PC-3 (cell line): ENCODE measurements at regions of chr21 and their contacts with region 1.

Region 1: GRCh38 chr21:39125752-39126485 is 57.3 kb downstream of the PSMG1 start:
- DNase-seq: peak; percentile 83
- ATAC-seq: peak; percentile 95
- H3K4me3 ChIP-seq: no peak overlapping the region
- H3K27ac ChIP-seq: no peak overlapping the region
- H3K4me1 ChIP-seq: peaks cover 10% of the 10 kb centered on the region; the same call in 1 of the 2 replicates
- H3K27me3 ChIP-seq: no peaks in the 10 kb centered on the region
- CTCF ChIP-seq: peak; percentile 82

Region 2: DNA sequence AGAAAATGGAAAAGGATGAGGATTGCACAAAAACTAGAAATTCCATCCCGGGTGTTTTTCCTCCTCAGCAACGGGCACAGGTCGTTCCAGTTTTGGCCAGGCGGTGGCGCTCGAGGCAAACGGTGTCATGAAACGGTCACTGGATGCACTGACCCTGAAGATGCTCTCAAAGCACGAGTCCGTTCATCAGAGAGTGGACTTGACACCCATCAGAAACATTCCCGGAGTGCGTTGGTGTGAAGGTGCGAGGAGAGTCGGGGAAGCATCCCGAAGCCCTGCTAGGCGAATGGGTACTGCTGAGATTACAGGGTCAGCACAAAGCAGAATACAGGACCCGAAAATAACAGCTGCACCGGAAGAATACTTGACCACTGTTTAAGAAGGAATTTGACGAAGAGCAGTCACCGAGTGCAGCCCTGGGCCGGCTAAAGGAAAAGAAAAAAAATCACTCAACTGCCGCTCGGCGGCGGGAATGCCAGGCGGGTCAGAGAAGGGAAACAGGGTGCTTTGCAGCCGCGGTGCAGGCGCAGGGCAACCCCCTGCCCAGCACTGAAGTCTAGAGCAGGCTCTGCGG is 391.9 kb before region 1 on chr21:
- CTCF ChIA-PET with region 1: no interaction called
- POLR2A ChIA-PET with region 1: interaction called, 3 read pairs
- intact Hi-C with region 1: loop called (anchors 1 kb)
- DNase-seq: peak; percentile 84
- ATAC-seq: peak; percentile 90
- H3K4me3 ChIP-seq: no peak overlapping the region
- H3K27ac ChIP-seq: 0 out of 2 replicates have a peak overlapping the region, but pooled peaks have one; percentile 7
- H3K4me1 ChIP-seq: peaks cover 6% of the 10 kb centered on the region; the same call in 1 of the 2 replicates
- H3K27me3 ChIP-seq: no peaks in the 10 kb centered on the region
- CTCF ChIP-seq: peak; percentile 97

Region 3: DNA sequence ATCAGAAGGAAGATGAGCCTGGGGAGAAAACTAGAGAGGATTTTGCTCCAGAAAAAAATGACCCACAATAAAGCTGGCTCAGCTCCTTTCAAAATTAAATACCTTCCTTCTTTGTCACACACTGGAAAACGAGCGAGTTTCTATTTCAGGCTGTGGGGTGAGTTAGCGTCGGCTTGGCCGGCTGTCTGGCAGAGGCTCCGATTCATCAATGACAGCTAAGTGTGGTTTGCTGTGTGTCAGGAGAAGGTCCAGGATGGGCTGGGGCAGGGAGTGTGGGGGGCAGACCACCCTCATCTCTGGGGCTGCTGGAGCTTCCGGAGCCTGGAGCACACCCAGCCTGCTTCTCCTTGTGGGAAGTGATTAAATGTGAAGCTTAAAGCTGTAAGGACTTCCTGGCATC is 200.0 kb before region 1 on chr21:
- CTCF ChIA-PET with region 1: no interaction called
- POLR2A ChIA-PET with region 1: no interaction called
- intact Hi-C with region 1: loop called (anchors 10 kb)
- DNase-seq: peak; percentile 87
- ATAC-seq: peak; percentile 85
- H3K4me3 ChIP-seq: peak overlapping the region; percentile 58
- H3K27ac ChIP-seq: 0 out of 2 replicates have a peak overlapping the region, but pooled peaks have one; percentile 12
- H3K4me1 ChIP-seq: peaks cover 27% of the 10 kb centered on the region
- H3K27me3 ChIP-seq: no peaks in the 10 kb centered on the region
- CTCF ChIP-seq: no peak

Region 4: GRCh38 chr21:39016740-39017315 is 109.1 kb before region 1 on chr21:
- CTCF ChIA-PET with region 1: no interaction called
- POLR2A ChIA-PET with region 1: no interaction called
- intact Hi-C with region 1: loop called (anchors 10 kb)
- DNase-seq: no peak
- ATAC-seq: no peak
- H3K4me3 ChIP-seq: no peak overlapping the region
- H3K27ac ChIP-seq: no peak overlapping the region
- H3K4me1 ChIP-seq: peaks cover 10% of the 10 kb centered on the region
- H3K27me3 ChIP-seq: no peaks in the 10 kb centered on the region
- CTCF ChIP-seq: no peak